ENCODE measurements at regions of chr21 and their contacts with region 1.

Region 1: DNA sequence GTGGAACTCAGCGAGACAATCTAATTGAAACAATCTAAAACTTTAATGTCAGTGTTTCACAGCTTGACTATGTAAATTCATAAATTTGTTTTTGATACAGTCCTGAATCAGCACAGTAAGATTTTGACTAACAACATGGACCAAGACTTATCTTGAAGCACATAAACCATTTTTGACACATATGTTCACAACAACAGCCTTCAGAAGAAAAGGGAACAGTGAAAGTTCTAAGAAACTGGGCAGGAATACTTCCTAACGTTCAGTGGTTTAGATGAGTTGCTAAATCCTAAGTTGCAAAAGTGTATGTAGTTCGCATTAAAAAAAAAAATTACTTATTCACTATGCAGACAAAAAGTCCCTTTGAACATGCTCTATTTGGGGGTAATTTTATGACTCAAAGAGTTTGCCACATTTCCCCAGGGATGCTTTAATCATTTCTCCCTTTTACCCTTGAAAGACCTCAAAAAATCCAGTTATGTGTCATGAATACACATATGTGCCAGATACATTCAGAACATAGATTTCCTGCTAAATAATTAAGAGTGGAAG is 120.2 kb downstream of the MRPL39 start:
- DNase-seq: no peak
- ATAC-seq: peak; percentile 75
- H3K4me3 Mint-ChIP-seq: peak overlapping the region; percentile 57
- H3K27ac Mint-ChIP-seq: peak overlapping the region; percentile 90
- H3K4me1 Mint-ChIP-seq: peaks cover 81% of the 10 kb centered on the region
- H3K27me3 Mint-ChIP-seq: no peaks in the 10 kb centered on the region

Region 2: DNA sequence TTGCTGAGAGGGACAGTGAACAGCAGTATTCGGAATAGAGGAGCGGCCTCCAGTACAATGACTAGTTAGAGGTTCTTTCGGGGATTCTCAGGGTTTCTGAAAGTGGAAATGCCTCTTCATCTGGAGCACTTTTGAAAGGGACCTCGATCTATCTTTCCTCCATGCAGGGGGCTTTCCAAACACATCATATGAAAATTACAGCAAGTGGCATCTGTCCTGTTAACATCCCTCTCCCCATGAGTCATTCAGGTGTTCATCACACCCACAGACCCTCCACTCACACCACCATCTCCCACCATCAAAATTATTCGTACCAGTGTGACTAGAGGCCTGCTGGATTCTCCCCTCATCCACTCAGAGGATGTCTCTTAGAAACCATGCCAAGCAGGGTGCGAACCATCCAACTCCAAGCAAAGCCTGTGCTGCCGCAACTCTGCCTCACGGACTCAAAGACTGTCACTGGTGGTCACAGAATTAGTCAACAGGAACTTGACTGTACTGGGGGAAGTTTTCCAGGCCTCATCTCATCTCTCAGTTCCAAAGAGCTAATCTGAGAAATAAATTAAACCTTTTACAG is 90.9 kb before region 1 on chr21:
- CTCF ChIA-PET with region 1: no interaction called
- POLR2A ChIA-PET with region 1: no interaction called
- intact Hi-C with region 1: loop called (anchors 1 kb)
- DNase-seq: peak; percentile 89
- ATAC-seq: peak; percentile 98
- H3K4me3 Mint-ChIP-seq: peak overlapping the region; percentile 54
- H3K27ac Mint-ChIP-seq: peak overlapping the region; percentile 93
- H3K4me1 Mint-ChIP-seq: peaks cover 31% of the 10 kb centered on the region
- H3K27me3 Mint-ChIP-seq: no peaks in the 10 kb centered on the region

Region 3: GRCh38 chr21:25457411-25457810 is 29.7 kb before region 1 on chr21:
- CTCF ChIA-PET with region 1: interaction called, 16 read pairs
- POLR2A ChIA-PET with region 1: interaction called, 4 read pairs
- intact Hi-C with region 1: loop called (anchors 1 kb)
- DNase-seq: no peak
- ATAC-seq: peak; percentile 46
- H3K4me3 Mint-ChIP-seq: peak overlapping the region; percentile 67
- H3K27ac Mint-ChIP-seq: peak overlapping the region; percentile 89
- H3K4me1 Mint-ChIP-seq: peaks cover 83% of the 10 kb centered on the region
- H3K27me3 Mint-ChIP-seq: no peaks in the 10 kb centered on the region

Region 4: GRCh38 chr21:25501996-25502665 is 15.0 kb after region 1 on chr21:
- CTCF ChIA-PET with region 1: interaction called, 26 read pairs
- POLR2A ChIA-PET with region 1: interaction called, 16 read pairs
- intact Hi-C with region 1: loop called (anchors 1 kb)
- DNase-seq: peak; percentile 83
- ATAC-seq: peak; percentile 87
- H3K4me3 Mint-ChIP-seq: peak overlapping the region; percentile 57
- H3K27ac Mint-ChIP-seq: peak overlapping the region; percentile 99
- H3K4me1 Mint-ChIP-seq: peaks cover 80% of the 10 kb centered on the region
- H3K27me3 Mint-ChIP-seq: no peaks in the 10 kb centered on the region

Region 5: GRCh38 chr21:25539606-25540005 is 52.5 kb after region 1 on chr21:
- CTCF ChIA-PET with region 1: no interaction called
- POLR2A ChIA-PET with region 1: interaction called, 11 read pairs
- intact Hi-C with region 1: no loop called
- DNase-seq: no peak
- ATAC-seq: no peak
- H3K4me3 Mint-ChIP-seq: no peak overlapping the region
- H3K27ac Mint-ChIP-seq: no peak overlapping the region
- H3K4me1 Mint-ChIP-seq: peaks cover 11% of the 10 kb centered on the region
- H3K27me3 Mint-ChIP-seq: no peaks in the 10 kb centered on the region

Region 6: GRCh38 chr21:25573409-25574206 is 86.5 kb after region 1 on chr21:
- CTCF ChIA-PET with region 1: interaction called, 8 read pairs
- POLR2A ChIA-PET with region 1: interaction called, 6 read pairs
- intact Hi-C with region 1: loop called (anchors 1 kb)
- DNase-seq: peak; percentile 83
- ATAC-seq: peak; percentile 34
- H3K4me3 Mint-ChIP-seq: peak overlapping the region; percentile 93
- H3K27ac Mint-ChIP-seq: peak overlapping the region; percentile 96
- H3K4me1 Mint-ChIP-seq: peaks cover 72% of the 10 kb centered on the region
- H3K27me3 Mint-ChIP-seq: no peaks in the 10 kb centered on the region